Brain microvascular endothelial cell (primary cell): ENCODE measurements at regions of chr9 and their contacts with region 1.

Region 1: DNA sequence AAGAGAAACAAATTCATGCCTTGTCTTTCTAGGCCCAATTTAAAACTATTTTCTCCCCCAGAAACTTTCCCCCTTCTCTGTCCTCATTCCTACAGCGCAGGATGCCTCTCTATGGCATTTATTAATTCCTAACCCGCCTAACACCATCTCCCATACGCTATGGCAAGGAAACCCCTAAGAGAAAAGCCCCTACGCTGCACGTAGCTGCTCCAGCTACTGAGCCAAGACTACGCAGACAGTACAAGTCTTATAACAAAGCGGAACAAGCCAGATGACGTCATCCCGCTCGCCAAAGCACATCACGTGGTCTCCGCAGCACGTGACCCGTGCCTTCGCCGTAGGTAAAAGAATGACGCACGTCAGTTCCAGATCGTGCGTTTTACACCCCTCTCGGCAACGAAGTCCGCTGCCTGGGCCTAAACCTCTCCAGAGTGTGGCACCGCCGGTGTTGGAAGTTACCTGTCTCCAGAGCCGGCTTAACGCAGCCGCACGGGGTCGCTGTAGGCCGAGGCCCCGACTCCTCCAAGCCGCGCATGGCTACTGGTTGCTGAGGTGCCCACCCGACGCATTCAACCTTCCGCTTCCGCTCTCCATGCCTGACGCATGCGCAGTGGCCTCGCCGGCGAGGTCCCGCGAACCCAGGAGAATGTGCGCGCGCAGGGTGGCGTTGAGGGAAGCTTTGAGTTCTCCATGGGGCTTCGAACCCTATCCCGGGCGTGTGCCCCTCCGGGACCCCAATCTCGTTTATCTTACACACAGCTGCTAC is at the start of gene TRMO:
- DNase-seq: peak; percentile 98
- H3K4me3 ChIP-seq: peak within 1 kb of the TSS; percentile 71
- H3K27ac ChIP-seq: peak within 1 kb of the TSS; percentile 92
- H3K27me3 ChIP-seq: peaks cover 5% of the 10 kb centered on the region
- CTCF ChIP-seq: peak; percentile 72

Region 2: DNA sequence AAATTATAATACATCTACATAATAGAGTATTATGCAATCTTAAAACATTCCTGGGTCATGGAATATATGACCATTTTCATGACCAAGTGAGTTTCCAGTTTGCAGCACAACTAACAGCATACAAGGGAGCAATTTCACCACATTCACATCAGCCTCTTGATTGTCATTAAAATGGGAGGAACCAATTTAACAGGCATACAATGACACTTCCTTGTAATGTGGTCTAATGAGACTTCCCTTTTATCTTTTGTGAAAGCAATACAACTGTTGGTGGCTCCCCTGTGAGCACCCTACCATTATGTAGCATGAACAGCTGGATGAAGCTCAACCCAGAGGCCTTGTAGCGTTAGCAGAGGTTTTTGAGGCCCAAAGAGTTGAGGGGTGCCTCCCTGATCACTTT is 434.3 kb before region 1 on chr9:
- in situ Hi-C with region 1: no loop called
- DNase-seq: no peak
- H3K4me3 ChIP-seq: no peak overlapping the region
- H3K27ac ChIP-seq: no peak overlapping the region
- H3K27me3 ChIP-seq: no peaks in the 10 kb centered on the region
- CTCF ChIP-seq: no peak

Region 3: DNA sequence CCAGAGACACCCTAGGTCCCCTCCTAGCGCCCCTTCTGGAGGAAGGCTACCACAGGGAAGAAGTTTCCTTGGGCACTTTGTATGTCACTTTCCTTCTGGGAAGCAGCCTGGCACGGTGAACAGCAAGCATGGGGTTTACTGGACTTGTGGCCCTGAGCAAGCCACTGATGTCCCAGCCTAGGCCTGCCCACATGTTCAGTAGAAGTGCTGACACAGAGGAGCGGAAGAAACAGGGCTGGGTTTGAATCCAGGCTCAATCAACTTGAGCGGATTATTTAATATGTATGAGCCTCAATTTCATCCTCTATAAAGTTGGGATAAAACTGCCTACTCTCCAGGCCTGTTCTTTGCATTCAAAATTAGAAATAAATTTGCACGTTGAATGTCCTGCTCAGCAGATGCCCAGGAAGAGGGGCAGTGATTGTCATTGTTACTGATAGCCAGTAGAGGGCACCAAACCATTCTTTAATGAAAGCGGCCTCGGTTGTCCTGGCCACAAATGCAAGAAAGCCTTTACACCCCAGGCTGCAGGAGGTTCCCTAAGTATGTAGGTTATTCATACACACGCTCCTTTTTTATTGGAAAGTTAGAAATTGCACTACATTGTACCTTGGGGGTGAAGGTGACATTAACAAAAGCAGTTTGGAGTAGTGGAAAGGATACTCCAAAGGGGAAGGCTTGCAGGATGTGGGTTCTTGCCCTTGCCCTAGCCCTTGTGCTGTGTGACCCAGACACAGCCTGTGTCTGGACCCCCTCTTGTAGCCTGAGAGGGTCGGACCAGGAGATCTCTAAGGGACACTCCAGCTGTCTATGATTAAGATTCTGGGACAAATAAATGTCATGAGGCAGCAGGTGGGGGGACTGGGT is 211.6 kb before region 1 on chr9:
- in situ Hi-C with region 1: loop called (anchors 25 kb)
- DNase-seq: peak; percentile 62
- H3K4me3 ChIP-seq: no peak overlapping the region
- H3K27ac ChIP-seq: no peak overlapping the region
- H3K27me3 ChIP-seq: peaks cover 10% of the 10 kb centered on the region
- CTCF ChIP-seq: peak; percentile 82

Region 4: GRCh38 chr9:97845130-97845529 is 77.0 kb before region 1 on chr9:
- in situ Hi-C with region 1: no loop called
- DNase-seq: peak; percentile 63
- H3K4me3 ChIP-seq: no peak overlapping the region
- H3K27ac ChIP-seq: no peak overlapping the region
- H3K27me3 ChIP-seq: peaks cover 42% of the 10 kb centered on the region
- CTCF ChIP-seq: no peak